ENCODE measurements at regions of chr19 and their contacts with region 1.

Region 1: DNA sequence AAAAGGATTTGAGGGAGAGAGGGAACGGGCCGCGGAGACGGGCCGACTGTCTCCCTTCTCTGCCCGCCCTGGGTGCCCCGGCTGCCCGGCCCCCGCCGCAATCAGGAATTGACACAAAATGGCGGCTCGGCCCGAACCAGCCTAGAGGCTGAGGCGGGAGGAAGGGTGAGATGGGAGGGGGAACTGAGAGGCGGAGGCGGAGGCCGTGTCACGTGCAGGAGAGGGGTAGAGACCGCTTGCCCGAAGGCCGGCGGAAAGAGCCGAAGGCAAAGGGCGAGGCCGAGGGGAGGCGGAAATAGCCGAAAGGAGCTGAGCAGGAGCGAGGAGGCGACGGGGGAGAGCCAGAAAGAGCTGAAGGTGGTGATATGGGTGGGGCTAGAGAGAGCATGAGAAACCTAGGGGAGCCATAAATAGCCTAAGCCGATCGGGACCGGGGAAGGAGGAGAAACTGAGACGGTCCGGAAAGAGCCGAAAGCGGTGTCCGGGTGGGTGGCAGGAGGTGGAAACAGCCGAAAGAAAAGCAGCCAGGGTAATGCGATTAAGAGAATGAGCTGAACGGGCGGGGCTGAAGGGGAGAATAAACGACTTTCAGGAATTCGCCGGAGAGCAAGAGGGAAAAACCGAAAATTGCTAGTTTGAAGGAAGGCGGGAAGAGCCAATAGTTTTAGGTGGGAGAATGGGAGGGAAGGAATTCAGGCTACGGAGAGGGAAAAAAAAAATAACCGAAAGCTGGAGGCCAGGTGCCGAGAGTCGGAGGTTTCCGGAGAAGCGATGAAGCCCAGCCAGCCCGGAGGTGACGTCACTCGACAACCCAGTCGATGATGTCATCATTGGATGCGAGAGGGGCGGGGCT is at the start of gene ZC3H4:
- DNase-seq: peak; percentile 100
- ATAC-seq: peak; percentile 91
- H3K4me3 Mint-ChIP-seq: peak within 1 kb of the TSS; percentile 93
- H3K27ac Mint-ChIP-seq: peak within 1 kb of the TSS; percentile 100
- H3K4me1 Mint-ChIP-seq: peaks cover 24% of the 10 kb centered on the region
- H3K27me3 Mint-ChIP-seq: no peaks in the 10 kb centered on the region
- total RNA-seq, gene ZC3H4: 88.6 to 128 TPM

Region 2: DNA sequence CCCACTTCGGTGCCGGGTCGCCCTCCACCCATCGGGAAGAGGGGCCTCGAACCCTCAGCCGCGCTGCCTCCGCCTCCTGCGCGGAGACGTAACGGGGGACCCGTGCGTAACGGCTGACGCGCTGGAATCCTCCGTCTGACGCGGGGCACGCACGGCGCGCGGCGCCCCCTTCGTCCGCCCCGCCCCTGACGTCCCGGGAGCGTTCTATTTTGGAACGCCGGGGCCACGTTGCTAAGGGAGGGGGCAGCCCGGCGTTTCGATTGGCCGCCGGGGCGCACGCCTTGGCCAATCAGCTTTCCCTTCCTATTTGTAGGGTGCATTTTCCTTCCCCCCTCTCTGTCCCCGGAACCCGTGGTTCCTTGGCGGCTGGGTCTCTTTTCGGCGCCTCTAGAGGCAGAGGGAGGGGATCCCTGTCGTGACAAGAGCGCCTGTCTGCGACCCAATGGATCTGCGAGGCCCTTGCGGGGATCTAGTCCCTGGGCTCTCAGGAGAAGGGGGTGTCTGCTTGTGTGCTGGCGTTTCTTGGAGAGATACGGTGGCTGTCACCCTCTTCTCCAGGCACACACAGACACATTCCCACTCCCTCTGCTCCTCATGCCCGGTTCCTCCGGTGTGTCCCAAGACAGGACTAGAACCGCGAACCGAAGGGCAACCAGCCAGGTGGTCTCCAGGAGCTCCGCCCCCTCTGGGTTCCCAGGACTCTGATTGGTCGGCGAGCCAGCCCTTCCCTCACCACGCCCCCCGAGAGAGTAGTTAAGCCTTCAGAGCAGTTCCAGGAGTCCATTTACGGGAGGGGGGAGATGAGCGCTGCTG is 1643.9 kb before region 1 on chr19:
- CTCF ChIA-PET with region 1: no interaction called
- POLR2A ChIA-PET with region 1: no interaction called
- intact Hi-C with region 1: loop called in 1 of 2 experiments (anchors 5 kb)
- DNase-seq: peak; percentile 97
- ATAC-seq: peak; percentile 82
- H3K4me3 Mint-ChIP-seq: peak overlapping the region; percentile 78
- H3K27ac Mint-ChIP-seq: peak overlapping the region; percentile 86
- H3K4me1 Mint-ChIP-seq: peaks cover 29% of the 10 kb centered on the region
- H3K27me3 Mint-ChIP-seq: peaks cover 11% of the 10 kb centered on the region

Region 3: DNA sequence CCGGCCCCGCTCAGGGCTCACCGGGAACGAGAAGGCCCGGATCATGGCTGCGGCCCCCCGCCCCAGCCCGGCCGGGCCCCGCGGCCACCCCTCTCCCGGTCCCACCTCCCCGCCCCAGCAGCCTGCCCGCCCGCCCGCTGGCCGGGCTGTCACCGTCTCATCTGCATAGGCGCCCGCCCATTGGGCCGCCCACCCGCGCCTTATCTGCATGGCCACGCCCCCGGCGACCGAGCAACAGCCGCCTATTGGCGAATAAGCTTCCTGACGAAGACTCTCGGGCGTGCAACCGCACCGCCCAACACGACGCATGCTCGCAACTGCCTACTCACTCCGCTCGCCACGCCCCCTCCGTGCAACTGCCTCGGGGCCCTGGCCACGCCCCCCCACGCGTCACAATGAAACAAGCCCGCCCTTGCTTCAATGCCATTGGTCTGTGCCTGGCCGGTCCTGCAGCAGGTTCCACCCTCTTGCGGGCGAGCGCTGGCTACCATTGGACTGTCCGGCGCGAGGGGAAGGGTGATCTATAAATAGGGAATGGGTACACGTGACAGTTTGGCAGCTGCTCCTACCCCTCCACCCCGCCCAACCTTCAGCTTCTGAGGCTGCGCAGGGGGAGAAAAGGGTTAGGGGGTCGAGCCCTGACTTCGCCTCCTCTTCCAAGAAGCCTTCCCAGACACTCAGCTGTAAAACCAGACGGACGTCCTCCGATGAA is 452.0 kb before region 1 on chr19 and contains the start of gene DACT3:
- CTCF ChIA-PET with region 1: no interaction called
- POLR2A ChIA-PET with region 1: no interaction called
- intact Hi-C with region 1: no loop called
- DNase-seq: peak; percentile 100
- ATAC-seq: peak; percentile 87
- H3K4me3 Mint-ChIP-seq: peak within 1 kb of the TSS; percentile 66
- H3K27ac Mint-ChIP-seq: peak within 1 kb of the TSS; percentile 62
- H3K4me1 Mint-ChIP-seq: peaks cover 28% of the 10 kb centered on the region
- H3K27me3 Mint-ChIP-seq: peaks cover 12% of the 10 kb centered on the region
- total RNA-seq, gene DACT3: 2.9 to 3.1 TPM

Region 4: DNA sequence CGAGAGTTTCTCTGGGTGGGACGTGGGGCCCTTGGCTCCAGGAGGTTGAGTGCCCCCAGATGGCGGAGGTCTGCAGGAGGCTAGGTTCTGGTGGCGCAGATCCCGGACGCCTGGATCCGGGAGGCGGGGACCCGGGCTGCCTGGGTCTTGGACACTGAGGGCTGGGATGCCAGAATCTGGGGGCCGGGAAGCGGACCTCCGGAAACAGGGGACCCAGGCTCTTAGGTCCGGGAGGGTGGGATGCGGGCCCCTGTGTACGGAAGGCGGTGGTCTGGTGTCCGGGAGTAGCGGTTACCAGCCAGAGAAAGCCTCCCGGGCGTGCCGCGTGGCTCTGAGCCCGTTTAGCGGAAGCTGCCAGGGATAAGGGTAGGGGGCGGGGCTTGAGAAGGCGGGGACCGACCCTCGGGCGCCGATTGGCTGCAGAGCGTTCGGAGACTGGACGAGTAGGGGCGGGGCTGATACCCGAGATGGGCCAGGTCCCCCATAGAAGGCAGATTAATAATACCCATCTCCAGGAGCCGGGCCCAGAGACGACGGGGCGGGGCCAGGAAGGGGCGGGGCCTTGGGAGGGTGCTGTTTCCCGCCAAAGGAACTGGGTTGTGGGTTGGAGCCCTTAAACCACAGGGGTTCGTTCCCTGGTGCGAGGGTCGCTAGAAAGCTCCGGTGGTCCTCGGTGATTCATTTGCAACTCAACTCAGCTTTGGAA is 324.8 kb before region 1 on chr19 and contains the start of gene SLC1A5:
- CTCF ChIA-PET with region 1: no interaction called
- POLR2A ChIA-PET with region 1: no interaction called
- intact Hi-C with region 1: loop called (anchors 1 to 5 kb)
- DNase-seq: peak; percentile 99
- ATAC-seq: peak; percentile 81
- H3K4me3 Mint-ChIP-seq: peak within 1 kb of the TSS; percentile 94
- H3K27ac Mint-ChIP-seq: peak within 1 kb of the TSS; percentile 94
- H3K4me1 Mint-ChIP-seq: peaks cover 38% of the 10 kb centered on the region
- H3K27me3 Mint-ChIP-seq: no peaks in the 10 kb centered on the region
- total RNA-seq, gene SLC1A5: 200 to 227 TPM

Region 5: DNA sequence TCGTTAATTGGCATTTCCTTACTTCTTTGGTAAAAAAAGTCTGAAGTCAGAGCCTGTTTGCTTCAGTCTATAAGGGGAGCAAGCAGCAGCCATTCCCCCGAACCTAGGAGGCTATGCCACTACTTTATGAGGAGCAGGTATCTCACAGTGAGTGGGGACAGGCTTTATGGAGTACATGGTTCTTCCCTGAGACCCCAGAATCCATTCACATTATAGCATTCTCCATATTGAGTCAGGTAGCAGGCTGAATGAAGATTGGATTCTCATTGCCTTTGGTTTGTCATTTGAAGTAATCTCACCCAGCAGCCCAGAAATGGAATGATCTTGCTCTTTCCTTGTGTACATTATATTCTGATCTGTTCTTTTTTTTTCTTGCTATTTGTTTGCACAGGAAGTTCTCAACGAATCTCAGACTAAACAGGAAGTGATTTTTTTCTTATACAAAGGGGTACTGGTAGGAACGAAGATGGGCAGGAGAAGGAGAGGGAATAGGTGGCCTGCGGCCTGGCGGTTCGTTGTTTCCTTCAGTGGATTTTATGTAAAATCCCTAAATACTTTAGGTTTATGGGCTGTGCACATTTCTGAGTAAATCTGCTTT is 178.1 kb before region 1 on chr19:
- CTCF ChIA-PET with region 1: no interaction called
- POLR2A ChIA-PET with region 1: no interaction called
- intact Hi-C with region 1: no loop called
- DNase-seq: no peak
- ATAC-seq: peak; percentile 9
- H3K4me3 Mint-ChIP-seq: peak overlapping the region; percentile 18
- H3K27ac Mint-ChIP-seq: peak overlapping the region; percentile 83
- H3K4me1 Mint-ChIP-seq: peaks cover 53% of the 10 kb centered on the region
- H3K27me3 Mint-ChIP-seq: no peaks in the 10 kb centered on the region

Region 6: DNA sequence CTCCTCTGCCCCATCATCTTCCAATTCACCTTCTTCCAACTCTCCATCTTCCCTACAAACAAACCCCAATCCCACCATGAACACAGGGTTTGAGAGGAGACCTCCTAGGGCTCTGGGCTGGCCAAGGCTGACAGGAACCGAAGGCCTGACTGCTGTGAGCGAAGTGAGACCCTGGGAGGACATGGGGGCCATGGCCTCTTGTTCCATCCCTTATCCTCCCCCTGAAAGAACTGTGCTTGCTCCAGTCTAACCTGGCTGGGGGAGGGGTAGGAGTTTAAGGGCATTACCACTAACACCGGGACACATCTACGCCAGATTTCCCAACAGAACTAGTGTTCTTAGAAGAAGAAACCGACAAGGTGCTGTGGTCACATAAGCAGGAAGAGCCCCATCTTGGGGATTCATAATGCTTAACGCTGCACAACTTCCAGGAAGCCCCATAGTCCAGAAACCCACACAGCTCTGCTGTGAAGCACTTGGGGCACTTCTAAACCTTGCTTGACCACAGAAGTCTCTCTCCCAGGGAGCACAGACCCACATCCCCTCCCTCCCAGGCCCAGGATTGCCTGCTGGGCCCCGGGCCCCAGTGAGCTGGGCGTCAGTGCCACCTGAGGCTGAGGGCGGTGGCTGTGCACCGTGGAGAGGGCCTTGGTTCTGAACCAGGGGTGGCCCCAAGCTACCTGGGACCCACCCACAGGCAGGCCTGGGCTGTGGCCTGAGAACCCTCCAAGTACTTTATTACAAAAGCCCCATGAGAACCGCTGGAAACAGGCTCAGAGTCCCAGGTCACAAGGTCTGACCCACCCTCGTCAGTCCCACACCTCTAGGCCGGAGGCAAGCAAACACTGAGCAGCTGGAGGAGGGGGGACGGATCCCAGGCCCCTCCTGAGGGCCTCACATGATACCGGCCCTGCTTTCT is 18.4 kb before region 1 on chr19:
- CTCF ChIA-PET with region 1: interaction called, 9 read pairs
- POLR2A ChIA-PET with region 1: interaction called, 17 read pairs
- intact Hi-C with region 1: loop called (anchors 1 kb)
- DNase-seq: peak; percentile 70
- ATAC-seq: peak; percentile 77
- H3K4me3 Mint-ChIP-seq: peak overlapping the region; percentile 65
- H3K27ac Mint-ChIP-seq: peak overlapping the region; percentile 95
- H3K4me1 Mint-ChIP-seq: peaks cover 53% of the 10 kb centered on the region
- H3K27me3 Mint-ChIP-seq: no peaks in the 10 kb centered on the region

Region 7: DNA sequence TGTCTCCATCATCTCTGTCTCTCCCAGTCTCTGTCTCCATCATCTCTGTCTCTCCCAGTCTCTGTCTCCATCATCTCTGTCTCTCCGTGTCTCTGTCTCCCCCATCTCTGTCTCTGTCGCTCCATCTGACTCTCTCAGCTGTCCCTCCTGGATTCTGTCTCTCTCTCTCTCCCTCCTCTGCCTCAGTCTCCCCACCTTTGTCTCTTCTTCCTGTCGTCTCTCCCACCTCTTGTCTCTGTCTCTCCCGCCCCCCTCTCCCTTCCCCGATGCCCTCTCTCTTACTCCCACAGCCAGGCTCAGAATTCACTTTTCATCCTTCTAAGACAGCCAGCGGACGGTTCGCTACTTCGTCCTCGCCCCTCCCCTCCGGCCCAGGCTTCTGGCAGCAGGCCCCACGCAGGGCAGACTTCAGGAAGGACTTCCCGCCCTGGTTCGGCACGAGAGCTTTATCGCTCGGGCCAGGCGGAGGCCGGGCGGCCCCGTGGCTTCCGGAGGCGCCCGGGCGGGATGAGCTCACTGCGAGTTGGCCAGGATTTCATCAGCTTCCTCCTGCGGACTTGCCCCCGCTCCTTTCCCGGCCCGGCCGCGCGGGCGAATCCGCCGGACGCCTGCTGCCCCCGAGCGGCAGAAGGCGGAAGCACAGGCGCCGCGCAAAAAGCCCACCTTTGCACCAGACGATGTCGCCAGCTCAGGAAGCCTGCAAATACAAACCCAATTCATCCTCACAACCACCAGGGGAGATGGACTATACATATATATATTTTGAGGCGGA is 130.7 kb after region 1 on chr19:
- CTCF ChIA-PET with region 1: interaction called, 5 read pairs
- POLR2A ChIA-PET with region 1: interaction called, 15 read pairs
- intact Hi-C with region 1: loop called in 1 of 2 experiments (anchors 1 kb)
- DNase-seq: peak; percentile 96
- ATAC-seq: peak; percentile 74
- H3K4me3 Mint-ChIP-seq: no peak overlapping the region
- H3K27ac Mint-ChIP-seq: peak overlapping the region; percentile 97
- H3K4me1 Mint-ChIP-seq: peaks cover 35% of the 10 kb centered on the region
- H3K27me3 Mint-ChIP-seq: peaks cover 2% of the 10 kb centered on the region

Region 8: DNA sequence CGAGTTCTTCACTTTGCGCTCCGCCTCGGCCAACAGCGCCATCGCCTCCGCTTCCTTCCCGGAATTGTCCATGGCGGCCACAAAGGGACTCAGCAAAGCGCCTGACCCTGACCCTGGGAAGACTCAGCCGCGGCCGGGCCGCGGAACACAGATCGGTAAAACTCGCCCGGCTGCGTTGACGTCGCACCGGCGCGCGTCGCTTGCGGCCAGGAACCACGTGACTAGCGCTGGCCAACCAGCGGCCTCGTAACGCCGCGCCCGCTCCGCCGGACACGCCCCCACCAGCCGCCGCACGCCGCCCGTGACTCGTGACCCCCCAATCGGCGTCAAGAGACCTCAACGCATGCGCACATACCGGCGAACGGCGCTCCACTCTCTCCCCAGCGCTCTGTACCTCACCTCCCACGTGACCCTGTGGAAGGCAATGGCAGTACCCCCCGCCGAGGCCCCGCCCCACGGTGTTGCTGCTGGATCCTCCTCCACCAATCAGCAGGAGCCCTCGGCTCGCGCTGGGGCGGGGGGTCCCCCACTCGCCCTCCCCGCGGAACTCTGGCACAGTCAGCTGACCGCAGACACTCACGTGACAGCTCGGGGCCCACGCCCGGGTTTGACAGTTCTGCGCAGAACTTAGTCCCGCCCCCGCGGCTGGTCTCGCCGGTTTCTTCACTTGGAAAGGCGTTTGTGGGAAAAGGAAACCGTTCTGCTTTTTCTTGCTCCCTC is 401.8 kb after region 1 on chr19 and contains the start of gene NAPA:
- CTCF ChIA-PET with region 1: no interaction called
- POLR2A ChIA-PET with region 1: no interaction called
- intact Hi-C with region 1: loop called in 1 of 2 experiments (anchors 1 kb)
- DNase-seq: peak; percentile 100
- ATAC-seq: peak; percentile 98
- H3K4me3 Mint-ChIP-seq: peak within 1 kb of the TSS; percentile 95
- H3K27ac Mint-ChIP-seq: peak within 1 kb of the TSS; percentile 99
- H3K4me1 Mint-ChIP-seq: peaks cover 76% of the 10 kb centered on the region
- H3K27me3 Mint-ChIP-seq: no peaks in the 10 kb centered on the region
- total RNA-seq, gene NAPA: 54.2 to 68.8 TPM

Region 9: DNA sequence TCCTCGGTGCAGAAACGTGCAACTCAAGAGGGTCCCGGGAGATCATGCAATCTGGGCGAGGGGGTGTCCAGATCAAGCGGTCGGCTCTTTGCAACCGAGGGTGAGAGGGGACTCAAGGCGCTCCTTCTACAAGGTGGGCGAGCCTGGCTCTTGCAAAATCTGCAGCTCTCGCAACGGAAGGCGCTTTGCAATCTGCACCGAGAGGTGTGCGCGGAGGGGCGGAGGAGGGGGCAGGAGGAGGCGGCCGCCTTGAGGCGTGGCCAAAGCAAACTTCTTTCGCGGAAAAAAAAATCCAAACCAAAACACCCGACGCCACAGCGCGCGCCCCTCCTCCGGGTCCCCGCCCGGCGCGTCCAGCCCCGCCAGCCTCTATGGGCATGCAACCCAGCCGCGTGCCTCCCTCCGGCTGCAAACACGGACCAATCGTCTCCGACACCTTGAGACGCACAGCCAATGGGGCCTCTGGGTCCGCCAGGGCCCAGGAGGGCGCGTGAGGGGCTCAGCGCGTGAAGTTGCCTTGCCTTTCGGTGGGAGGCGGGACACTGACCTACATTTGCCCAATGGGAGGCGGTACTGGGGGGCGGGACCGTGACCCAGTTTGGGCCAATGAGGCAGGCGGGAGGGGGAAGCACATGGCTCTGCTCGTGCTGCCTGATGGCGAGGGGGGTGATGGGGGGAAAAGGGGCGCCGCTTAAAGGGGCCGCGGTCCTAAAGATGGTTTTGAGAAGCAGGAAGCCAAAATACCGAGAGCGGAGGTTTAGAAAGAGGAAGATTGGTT is 1524.1 kb after region 1 on chr19 and contains the start of gene DBP:
- CTCF ChIA-PET with region 1: no interaction called
- POLR2A ChIA-PET with region 1: no interaction called
- intact Hi-C with region 1: loop called in 1 of 2 experiments (anchors 10 kb)
- DNase-seq: peak; percentile 98
- ATAC-seq: peak; percentile 75
- H3K4me3 Mint-ChIP-seq: peak within 1 kb of the TSS; percentile 83
- H3K27ac Mint-ChIP-seq: peak within 1 kb of the TSS; percentile 99
- H3K4me1 Mint-ChIP-seq: peaks cover 55% of the 10 kb centered on the region
- H3K27me3 Mint-ChIP-seq: no peaks in the 10 kb centered on the region
- total RNA-seq, gene DBP: 8.3 to 12.4 TPM